Activated B cell treated with CpG ODN at 0.5 μM for 24 hours (primary cell): ENCODE measurements at regions of chr9 and their contacts with region 1.

Region 1: GRCh38 chr9:127199001-127199791 is 65.4 kb upstream of the GARNL3 start:
- DNase-seq: peak; percentile 71
- ATAC-seq: peak; percentile 89
- H3K4me3 Mint-ChIP-seq: no peak overlapping the region
- H3K27ac Mint-ChIP-seq: no peak overlapping the region
- H3K4me1 Mint-ChIP-seq: no peaks in the 10 kb centered on the region
- H3K27me3 Mint-ChIP-seq: no peaks in the 10 kb centered on the region
- CTCF ChIP-seq: peak; percentile 58

Region 2: DNA sequence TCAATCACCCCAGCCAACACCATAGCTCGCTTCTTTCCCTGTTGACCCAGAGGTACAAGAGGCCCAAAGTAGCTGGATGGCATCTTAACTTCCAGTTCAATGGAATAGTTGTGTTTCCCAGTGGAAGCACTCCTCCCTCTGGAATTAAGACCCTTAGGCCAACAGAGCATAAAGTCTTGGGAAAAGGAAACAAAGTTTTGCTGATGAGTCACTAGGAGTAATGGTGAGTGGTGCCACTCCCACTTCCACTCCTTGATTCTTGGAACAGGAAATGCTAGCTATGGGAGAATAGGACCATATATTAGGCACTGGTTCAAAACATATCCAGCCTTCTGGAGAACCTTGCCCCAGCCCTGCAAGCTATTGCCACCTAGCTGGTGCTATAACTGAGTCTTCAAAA is 630.2 kb before region 1 on chr9:
- CTCF ChIA-PET with region 1: no interaction called
- POLR2A ChIA-PET with region 1: no interaction called
- intact Hi-C with region 1: no loop called
- DNase-seq: no peak
- ATAC-seq: no peak
- H3K4me3 Mint-ChIP-seq: no peak overlapping the region
- H3K27ac Mint-ChIP-seq: no peak overlapping the region
- H3K4me1 Mint-ChIP-seq: no peaks in the 10 kb centered on the region
- H3K27me3 Mint-ChIP-seq: peaks cover 25% of the 10 kb centered on the region
- CTCF ChIP-seq: no peak

Region 3: DNA sequence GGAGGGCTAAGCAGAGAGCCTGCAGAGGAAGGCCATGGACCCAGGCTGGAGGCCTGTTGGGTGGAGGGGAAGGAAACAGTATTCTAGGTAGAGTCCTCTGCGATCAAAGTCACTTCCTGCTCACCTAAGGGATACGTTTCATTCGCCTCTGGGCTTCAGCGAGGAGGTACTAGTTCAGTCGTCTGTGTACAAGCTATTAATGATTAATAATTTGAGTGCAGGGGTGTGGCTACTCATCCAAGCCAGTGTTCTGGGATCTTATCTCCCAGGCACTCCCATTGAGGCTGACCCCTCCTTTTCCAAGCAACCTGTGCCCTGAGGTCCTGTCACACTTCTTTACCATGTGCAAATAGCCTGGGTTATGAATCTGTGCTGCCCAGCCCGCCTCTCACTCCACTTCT is 259.4 kb before region 1 on chr9:
- CTCF ChIA-PET with region 1: interaction called, 150 read pairs
- POLR2A ChIA-PET with region 1: interaction called, 5 read pairs
- intact Hi-C with region 1: loop called (anchors 1 kb)
- DNase-seq: no peak
- ATAC-seq: no peak
- H3K4me3 Mint-ChIP-seq: no peak overlapping the region
- H3K27ac Mint-ChIP-seq: no peak overlapping the region
- H3K4me1 Mint-ChIP-seq: peaks cover 5% of the 10 kb centered on the region
- H3K27me3 Mint-ChIP-seq: no peaks in the 10 kb centered on the region
- CTCF ChIP-seq: no peak

Region 4: DNA sequence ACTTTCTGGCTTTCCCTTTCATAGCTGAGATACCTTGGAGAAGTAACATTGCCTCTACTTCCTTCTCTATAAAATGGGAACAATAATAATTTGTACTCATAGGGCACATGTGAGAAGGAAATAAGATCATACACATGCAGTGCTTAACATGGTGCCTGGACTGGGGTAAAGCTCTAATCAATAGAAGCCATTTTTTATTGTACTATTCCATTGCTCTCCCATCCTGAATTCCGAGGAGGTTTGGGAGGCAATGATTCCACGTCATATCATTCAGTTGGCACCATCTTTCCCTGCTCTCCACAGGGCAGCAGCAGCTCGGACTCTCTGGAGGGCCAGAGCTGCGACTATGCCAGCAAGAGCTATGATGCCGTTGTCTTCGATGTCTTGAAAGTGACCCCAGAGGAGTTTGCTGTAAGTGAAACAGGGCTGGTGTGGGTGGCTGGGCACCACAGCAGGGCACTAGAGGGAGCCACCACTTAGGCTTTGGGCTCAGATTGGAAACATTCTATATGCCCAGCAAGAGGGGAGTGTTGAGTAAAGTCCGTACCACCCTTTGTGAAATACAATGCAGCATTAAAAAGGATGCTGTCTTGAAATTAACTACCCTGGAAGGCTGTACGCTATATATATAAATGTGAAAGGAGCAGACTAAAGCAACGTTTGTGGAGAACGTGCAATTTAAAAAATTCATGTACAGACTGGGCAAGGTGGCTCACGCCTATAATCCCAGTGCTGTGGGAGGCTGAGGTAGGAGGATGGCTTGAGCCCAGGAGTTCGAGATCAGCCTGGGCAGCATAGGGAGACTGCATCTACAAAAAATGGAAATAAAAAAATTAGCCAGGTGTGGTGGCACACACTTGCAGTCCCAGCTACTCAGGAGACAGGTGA is 233.4 kb before region 1 on chr9:
- CTCF ChIA-PET with region 1: interaction called, 9 read pairs
- POLR2A ChIA-PET with region 1: no interaction called
- intact Hi-C with region 1: loop called (anchors 1 kb)
- DNase-seq: no peak
- ATAC-seq: no peak
- H3K4me3 Mint-ChIP-seq: no peak overlapping the region
- H3K27ac Mint-ChIP-seq: no peak overlapping the region
- H3K4me1 Mint-ChIP-seq: no peaks in the 10 kb centered on the region
- H3K27me3 Mint-ChIP-seq: no peaks in the 10 kb centered on the region
- CTCF ChIP-seq: no peak

Region 5: GRCh38 chr9:126985870-126986498 is 213.2 kb before region 1 on chr9:
- CTCF ChIA-PET with region 1: interaction called, 13 read pairs
- POLR2A ChIA-PET with region 1: no interaction called
- intact Hi-C with region 1: loop called (anchors 1 kb)
- DNase-seq: peak; percentile 36
- ATAC-seq: peak; percentile 96
- H3K4me3 Mint-ChIP-seq: peak overlapping the region; percentile 66
- H3K27ac Mint-ChIP-seq: peak overlapping the region; percentile 59
- H3K4me1 Mint-ChIP-seq: peaks cover 33% of the 10 kb centered on the region
- H3K27me3 Mint-ChIP-seq: no peaks in the 10 kb centered on the region
- CTCF ChIP-seq: no peak

Region 6: GRCh38 chr9:127366594-127366993 is 167.4 kb after region 1 on chr9:
- CTCF ChIA-PET with region 1: no interaction called
- POLR2A ChIA-PET with region 1: no interaction called
- intact Hi-C with region 1: no loop called
- DNase-seq: no peak
- ATAC-seq: no peak
- H3K4me3 Mint-ChIP-seq: no peak overlapping the region
- H3K27ac Mint-ChIP-seq: no peak overlapping the region
- H3K4me1 Mint-ChIP-seq: no peaks in the 10 kb centered on the region
- H3K27me3 Mint-ChIP-seq: no peaks in the 10 kb centered on the region
- CTCF ChIP-seq: no peak

Region 7: DNA sequence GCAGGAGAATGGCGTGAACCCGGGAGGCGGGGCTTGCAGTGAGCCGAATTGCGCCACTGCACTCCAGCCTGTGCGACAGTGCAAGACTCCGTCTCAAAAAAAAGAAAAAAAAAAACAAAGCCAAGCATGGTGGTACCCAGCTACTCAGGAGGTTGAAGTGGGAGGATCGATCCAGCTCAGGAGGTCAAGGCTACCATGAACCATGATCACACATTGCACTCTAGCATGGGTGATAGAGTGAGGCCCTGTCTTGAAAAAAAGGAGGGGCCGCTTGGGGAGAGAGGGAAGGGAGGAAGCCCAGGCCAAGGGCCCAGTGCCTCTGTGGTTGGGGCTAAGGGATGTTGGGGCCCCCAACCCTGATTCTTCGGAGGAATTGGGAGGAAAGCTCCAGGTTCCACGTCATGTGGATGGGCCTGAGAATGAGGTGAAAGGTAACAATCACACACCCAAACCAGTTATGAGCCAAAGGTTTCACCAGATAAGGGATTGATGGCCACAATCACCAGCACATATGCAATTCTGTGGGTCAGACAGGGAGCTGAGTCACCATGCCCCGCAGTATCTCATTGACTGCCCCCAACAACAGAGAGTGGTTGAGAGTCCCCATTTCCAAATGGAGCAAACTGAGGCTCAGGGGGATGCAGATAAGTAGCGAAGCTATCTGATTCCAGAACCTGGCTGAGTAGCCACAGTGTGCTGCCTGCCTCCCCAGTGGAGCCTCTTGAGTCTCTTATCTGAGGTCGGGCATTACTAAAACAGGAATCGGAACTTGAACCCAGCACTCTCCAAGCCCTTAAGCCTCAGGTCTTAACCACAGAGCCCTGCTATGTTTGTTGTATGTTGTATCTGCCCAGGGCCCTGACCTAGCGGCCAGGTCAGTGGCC is 1097.4 kb after region 1 on chr9:
- CTCF ChIA-PET with region 1: no interaction called
- POLR2A ChIA-PET with region 1: no interaction called
- intact Hi-C with region 1: no loop called
- DNase-seq: no peak
- ATAC-seq: no peak
- H3K4me3 Mint-ChIP-seq: no peak overlapping the region
- H3K27ac Mint-ChIP-seq: no peak overlapping the region
- H3K4me1 Mint-ChIP-seq: no peaks in the 10 kb centered on the region
- H3K27me3 Mint-ChIP-seq: no peaks in the 10 kb centered on the region
- CTCF ChIP-seq: no peak